Ovary (tissue), 10 donors: ENCODE measurements at regions of chr1 and their contacts with region 1.

Region 1: GRCh38 chr1:97745912-97746311 is 174.9 kb downstream of the DPYD start:
- DNase-seq: no peak
- H3K4me3 ChIP-seq: no peak overlapping the region
- H3K27ac ChIP-seq: no peak overlapping the region
- H3K4me1 ChIP-seq: peaks cover 1% of the 10 kb centered on the region
- H3K27me3 ChIP-seq: no peaks in the 10 kb centered on the region
- CTCF ChIP-seq: no peak
- EP300 ChIP-seq: no peak
- POLR2A ChIP-seq: no peak

Region 2: DNA sequence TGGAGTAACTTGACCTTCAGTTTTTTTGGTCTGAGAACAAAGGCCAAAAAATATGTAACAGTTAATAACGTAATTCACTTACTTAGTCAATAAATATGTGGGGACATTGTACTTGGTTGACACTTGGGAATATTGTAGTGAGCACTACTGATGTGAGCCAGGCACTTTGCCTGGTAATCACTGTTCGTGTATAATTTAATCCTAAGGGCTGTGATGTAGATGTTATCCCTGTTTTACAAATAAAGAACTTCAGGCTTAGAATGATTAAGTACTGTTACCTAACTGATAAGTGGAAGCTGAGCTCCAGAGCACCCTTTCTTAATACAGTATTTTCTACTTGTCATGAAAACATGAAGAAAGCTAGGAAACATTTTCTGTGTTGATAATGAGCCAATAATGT is 996.3 kb before region 1 on chr1:
- intact Hi-C with region 1: loop called in 1 of 4 experiments (anchors 5 kb)
- DNase-seq: no peak
- H3K4me3 ChIP-seq: no peak overlapping the region
- H3K27ac ChIP-seq: no peak overlapping the region
- H3K4me1 ChIP-seq: peaks cover 3% of the 10 kb centered on the region
- H3K27me3 ChIP-seq: no peaks in the 10 kb centered on the region
- CTCF ChIP-seq: no peak
- EP300 ChIP-seq: no peak
- POLR2A ChIP-seq: no peak

Region 3: DNA sequence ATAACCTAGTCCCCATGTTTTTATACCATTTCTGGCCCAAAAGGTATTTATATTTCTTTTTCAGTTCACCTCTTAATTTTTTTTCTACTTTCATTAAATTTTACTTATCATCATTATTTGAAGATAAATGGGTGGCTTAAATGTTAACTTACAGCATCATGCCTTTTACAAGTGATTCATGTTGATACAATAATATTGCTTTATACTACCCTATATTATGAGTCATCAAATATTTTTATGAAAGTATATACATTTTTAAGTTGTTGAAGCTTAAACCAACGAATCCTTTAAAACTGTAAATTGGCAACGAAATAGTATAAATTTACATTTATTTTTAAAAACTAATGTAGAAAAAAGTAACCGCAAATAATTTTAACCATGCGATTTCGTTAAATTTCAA is 32.9 kb before region 1 on chr1:
- intact Hi-C with region 1: no loop called
- DNase-seq: no peak
- H3K4me3 ChIP-seq: no peak overlapping the region
- H3K27ac ChIP-seq: no peak overlapping the region
- H3K4me1 ChIP-seq: no peaks in the 10 kb centered on the region
- H3K27me3 ChIP-seq: no peaks in the 10 kb centered on the region
- CTCF ChIP-seq: no peak
- EP300 ChIP-seq: no peak
- POLR2A ChIP-seq: no peak

Region 4: GRCh38 chr1:98211271-98211845 is 465.4 kb after region 1 on chr1:
- intact Hi-C with region 1: no loop called
- DNase-seq: no peak
- H3K4me3 ChIP-seq: no peak overlapping the region
- H3K27ac ChIP-seq: no peak overlapping the region
- H3K4me1 ChIP-seq: no peaks in the 10 kb centered on the region
- H3K27me3 ChIP-seq: no peaks in the 10 kb centered on the region
- CTCF ChIP-seq: no peak
- EP300 ChIP-seq: no peak
- POLR2A ChIP-seq: no peak